ENCODE measurements at regions of chr7 and their contacts with region 1.

Region 1: DNA sequence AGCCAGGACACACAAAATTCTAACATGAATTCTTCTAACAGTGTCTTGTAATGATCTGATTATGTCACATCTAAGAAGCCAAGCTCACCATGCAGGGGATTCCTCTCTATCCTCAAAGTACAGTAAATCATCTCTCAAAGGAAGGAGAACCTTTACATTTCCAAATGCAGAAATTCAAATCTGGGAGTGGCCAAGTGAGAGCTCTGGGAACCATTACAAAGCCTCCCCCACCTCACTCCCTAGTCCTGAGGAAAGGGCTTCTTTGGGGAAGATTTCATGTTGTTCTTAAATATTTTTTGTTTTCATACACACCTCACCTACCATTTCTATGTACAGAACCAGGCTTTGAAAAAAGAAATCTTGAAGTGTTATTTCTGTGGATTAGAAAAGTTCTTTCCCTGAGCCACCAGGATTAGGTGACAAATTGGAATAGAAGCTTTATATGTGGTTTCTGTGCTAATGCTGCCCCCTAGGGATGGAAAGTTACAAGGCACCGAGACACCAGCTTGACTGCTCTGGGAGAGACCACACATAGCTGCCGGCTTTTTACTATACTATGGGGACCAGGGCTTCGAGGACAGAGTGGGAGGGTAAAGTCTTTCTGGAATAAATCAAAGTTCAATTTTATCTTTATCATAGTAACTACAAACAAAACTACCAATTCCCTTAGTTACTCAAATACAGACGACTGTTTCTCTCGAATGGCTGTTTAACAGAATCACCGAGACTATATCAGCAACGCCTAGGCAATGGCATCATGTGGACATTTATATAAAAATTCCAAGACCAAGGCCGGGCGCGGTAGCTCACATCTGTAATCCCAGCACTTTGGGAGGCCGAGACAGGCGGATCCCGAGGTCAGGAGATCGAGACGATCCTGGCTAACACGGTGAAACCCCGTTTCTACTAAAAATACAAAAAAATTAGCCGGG is 116.1 kb downstream of the RNF216 start:
- DNase-seq: peak; percentile 81 to 91 (median 84)
- H3K4me3 ChIP-seq: no peak overlapping the region
- H3K27ac ChIP-seq: no peak overlapping the region
- H3K4me1 ChIP-seq: peaks cover 3 to 39% (median 26%) of the 10 kb centered on the region in 4 experiments
- H3K27me3 ChIP-seq: no peaks in the 10 kb centered on the region

Region 2: GRCh38 chr7:5494683-5495561 is 170.4 kb before region 1 on chr7:
- CTCF ChIA-PET with region 1: interaction called, 50 read pairs
- POLR2A ChIA-PET with region 1: interaction called, 3 read pairs
- DNase-seq: peak; percentile 76 to 85 (median 82)
- H3K4me3 ChIP-seq: peak overlapping the region in 4 of 7 experiments; percentile 25 to 59 (median 36)
- H3K27ac ChIP-seq: no peak overlapping the region
- H3K4me1 ChIP-seq: peaks cover 0 to 52% (median 44%) of the 10 kb centered on the region in 4 experiments
- H3K27me3 ChIP-seq: no peaks in the 10 kb centered on the region

Region 3: GRCh38 chr7:5646852-5647251 is 18.5 kb before region 1 on chr7:
- CTCF ChIA-PET with region 1: interaction called, 18 read pairs
- POLR2A ChIA-PET with region 1: no interaction called
- DNase-seq: no peak
- H3K4me3 ChIP-seq: no peak overlapping the region
- H3K27ac ChIP-seq: no peak overlapping the region
- H3K4me1 ChIP-seq: peaks cover 13 to 29% (median 18%) of the 10 kb centered on the region in 4 experiments
- H3K27me3 ChIP-seq: no peaks in the 10 kb centered on the region

Region 4: DNA sequence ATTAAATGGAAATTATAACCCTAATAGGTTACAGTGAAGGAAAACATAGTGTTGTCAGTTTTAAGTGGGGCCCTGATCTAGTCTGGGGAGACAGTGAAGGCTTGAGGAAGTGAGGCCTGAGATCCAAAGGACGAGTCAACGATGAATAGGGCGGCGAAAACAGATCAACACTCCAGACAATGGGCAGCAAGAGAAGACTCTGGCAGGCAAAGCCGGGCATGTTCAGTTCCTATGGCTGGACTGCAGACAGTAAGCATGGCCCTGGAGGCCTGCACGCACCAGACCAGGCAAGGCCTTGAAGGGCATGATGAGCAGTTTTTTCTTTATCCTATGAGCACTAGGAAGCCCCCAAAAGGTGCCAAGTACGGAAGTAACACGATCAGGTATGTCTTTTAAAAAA is 11.7 kb before region 1 on chr7:
- CTCF ChIA-PET with region 1: interaction called, 11 read pairs
- POLR2A ChIA-PET with region 1: no interaction called
- DNase-seq: no peak
- H3K4me3 ChIP-seq: no peak overlapping the region
- H3K27ac ChIP-seq: no peak overlapping the region
- H3K4me1 ChIP-seq: no peaks in the 10 kb centered on the region
- H3K27me3 ChIP-seq: no peaks in the 10 kb centered on the region

Region 5: GRCh38 chr7:5677538-5678294 is 12.4 kb after region 1 on chr7:
- CTCF ChIA-PET with region 1: interaction called, 67 read pairs
- POLR2A ChIA-PET with region 1: interaction called, 3 read pairs
- DNase-seq: peak; percentile 68 to 85 (median 83)
- H3K4me3 ChIP-seq: no peak overlapping the region
- H3K27ac ChIP-seq: no peak overlapping the region
- H3K4me1 ChIP-seq: peaks cover 0 to 26% (median 8%) of the 10 kb centered on the region in 4 experiments
- H3K27me3 ChIP-seq: no peaks in the 10 kb centered on the region

Region 6: DNA sequence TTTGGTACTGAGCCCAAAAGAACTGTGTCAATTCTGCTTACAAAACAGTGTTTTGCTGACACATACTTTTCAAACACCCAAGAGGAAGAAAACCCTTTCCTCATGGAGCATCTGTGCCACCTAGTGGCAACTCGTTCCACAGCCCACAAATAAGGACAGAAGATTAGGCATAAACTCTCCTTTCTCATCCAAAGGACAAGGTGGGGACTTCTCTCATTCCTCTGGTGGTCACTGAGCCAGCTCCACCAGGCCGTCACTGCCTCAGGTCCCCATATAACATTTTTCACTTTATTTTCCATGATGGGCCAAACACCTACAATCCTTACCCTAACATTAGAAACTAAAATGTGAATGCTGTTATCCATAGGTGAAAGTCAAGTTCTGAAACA is 39.2 kb after region 1 on chr7:
- CTCF ChIA-PET with region 1: interaction called, 12 read pairs
- POLR2A ChIA-PET with region 1: interaction called, 3 read pairs
- DNase-seq: peak; percentile 84 to 91 (median 86)
- H3K4me3 ChIP-seq: no peak overlapping the region
- H3K27ac ChIP-seq: no peak overlapping the region
- H3K4me1 ChIP-seq: peaks cover 4 to 23% (median 12%) of the 10 kb centered on the region in 4 experiments
- H3K27me3 ChIP-seq: no peaks in the 10 kb centered on the region

Region 7: GRCh38 chr7:5792268-5792667 is 126.9 kb after region 1 on chr7:
- CTCF ChIA-PET with region 1: no interaction called
- POLR2A ChIA-PET with region 1: no interaction called
- DNase-seq: no peak
- H3K4me3 ChIP-seq: no peak overlapping the region
- H3K27ac ChIP-seq: no peak overlapping the region
- H3K4me1 ChIP-seq: peaks cover 0 to 2% (median under 1%) of the 10 kb centered on the region in 4 experiments
- H3K27me3 ChIP-seq: no peaks in the 10 kb centered on the region

Region 8: DNA sequence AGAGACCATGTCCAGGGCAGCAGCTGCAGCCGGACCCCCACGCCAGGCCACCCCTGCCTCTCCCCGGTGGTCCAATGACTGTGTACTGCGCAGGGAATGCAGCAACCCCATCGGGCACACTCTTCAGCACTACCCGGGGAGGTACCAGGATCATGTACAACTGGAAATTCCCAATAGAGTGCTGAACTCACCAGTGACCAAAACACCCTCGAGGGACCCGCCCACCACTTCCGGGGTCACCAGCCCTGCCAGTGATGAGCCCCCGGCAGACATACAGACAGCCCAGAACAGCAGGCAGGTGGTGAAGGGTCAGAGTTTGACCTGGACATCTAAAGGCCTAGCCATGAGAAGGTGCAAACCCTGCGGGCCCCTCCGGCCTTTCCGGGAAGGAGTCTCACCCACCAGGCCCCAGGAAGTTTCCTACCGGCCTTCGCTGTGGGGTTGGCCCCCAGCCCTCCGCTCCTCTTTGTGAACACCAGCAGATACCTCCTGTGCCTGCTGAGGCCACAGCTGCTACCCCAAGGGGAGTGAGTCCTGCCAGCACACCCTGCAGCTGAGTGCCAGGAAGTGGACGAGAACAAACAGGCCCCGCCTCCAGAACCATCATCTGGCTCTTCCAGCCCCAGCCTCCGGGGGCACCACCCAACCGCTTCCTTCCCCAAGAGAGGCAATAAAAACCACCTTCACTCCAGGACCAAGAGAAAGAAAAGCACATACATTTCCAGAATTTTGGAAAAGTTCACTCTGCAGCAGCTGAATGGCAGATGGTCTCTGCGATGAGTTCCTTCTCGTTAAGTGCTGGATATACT is 360.9 kb after region 1 on chr7:
- CTCF ChIA-PET with region 1: no interaction called
- POLR2A ChIA-PET with region 1: no interaction called
- DNase-seq: peak; percentile 67 to 90 (median 88)
- H3K4me3 ChIP-seq: peak overlapping the region in 5 of 7 experiments; percentile 6 to 59 (median 47)
- H3K27ac ChIP-seq: peak overlapping the region; percentile 13 to 81
- H3K4me1 ChIP-seq: peaks cover 7 to 28% (median 19%) of the 10 kb centered on the region in 4 experiments
- H3K27me3 ChIP-seq: no peaks in the 10 kb centered on the region